ENCODE measurements at regions of chr21 and their contacts with region 1.

Region 1: DNA sequence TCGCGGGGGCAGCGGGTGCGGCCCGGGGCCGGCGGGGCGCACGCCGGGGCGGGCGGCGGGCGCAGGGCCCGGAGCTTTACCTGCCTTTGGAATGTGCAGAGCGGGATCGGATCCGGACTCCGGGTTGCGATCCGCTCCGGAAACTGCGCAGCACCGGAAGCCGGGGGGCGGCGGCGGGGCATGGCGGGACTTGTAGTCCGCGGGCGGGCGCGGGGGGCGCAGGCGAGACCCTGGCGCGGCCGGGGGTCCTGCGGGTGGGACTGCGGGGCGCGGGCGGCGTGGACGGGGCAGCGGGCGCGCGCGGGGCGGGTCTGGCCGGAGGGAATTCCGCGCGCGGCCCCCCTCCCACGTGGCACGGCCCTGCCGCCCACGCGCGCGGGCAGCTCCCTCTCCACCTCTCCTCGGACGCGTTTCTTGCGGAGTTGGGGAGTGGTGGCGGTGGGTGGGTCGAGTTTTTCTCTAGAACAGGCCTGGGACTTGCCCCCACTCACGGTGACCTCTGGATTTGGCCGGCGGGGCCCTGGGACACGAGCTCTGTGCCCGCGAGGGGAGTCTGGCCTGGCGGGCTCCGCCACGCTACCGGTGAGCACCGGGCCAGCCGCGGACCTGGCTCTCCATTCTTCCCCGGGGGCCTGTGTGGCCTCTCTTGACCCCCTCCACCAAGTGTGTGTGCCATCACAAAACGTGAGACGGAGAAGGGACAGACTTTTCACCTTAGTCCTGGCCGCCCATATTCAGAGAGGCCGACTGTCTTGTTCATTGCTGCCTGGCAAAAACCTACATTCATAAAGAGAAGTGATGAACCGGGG is at the start of gene PRDM15:
- DNase-seq: peak; percentile 88
- H3K4me3 ChIP-seq: peak within 1 kb of the TSS; percentile 81
- H3K27ac ChIP-seq: peak within 1 kb of the TSS; percentile 96
- H3K4me1 ChIP-seq: peaks cover 48% of the 10 kb centered on the region
- CTCF ChIP-seq: no peak
- total RNA-seq, gene PRDM15: 19.7 and 30.5 TPM in 2 replicates

Region 2: GRCh38 chr21:41750048-41750447 is 129.3 kb before region 1 on chr21:
- CTCF ChIA-PET with region 1: no interaction called
- POLR2A ChIA-PET with region 1: interaction called, 10 read pairs
- intact Hi-C with region 1: no loop called
- DNase-seq: no peak
- H3K4me3 ChIP-seq: no peak overlapping the region
- H3K27ac ChIP-seq: no peak overlapping the region
- H3K4me1 ChIP-seq: peaks cover 8% of the 10 kb centered on the region
- CTCF ChIP-seq: no peak

Region 3: DNA sequence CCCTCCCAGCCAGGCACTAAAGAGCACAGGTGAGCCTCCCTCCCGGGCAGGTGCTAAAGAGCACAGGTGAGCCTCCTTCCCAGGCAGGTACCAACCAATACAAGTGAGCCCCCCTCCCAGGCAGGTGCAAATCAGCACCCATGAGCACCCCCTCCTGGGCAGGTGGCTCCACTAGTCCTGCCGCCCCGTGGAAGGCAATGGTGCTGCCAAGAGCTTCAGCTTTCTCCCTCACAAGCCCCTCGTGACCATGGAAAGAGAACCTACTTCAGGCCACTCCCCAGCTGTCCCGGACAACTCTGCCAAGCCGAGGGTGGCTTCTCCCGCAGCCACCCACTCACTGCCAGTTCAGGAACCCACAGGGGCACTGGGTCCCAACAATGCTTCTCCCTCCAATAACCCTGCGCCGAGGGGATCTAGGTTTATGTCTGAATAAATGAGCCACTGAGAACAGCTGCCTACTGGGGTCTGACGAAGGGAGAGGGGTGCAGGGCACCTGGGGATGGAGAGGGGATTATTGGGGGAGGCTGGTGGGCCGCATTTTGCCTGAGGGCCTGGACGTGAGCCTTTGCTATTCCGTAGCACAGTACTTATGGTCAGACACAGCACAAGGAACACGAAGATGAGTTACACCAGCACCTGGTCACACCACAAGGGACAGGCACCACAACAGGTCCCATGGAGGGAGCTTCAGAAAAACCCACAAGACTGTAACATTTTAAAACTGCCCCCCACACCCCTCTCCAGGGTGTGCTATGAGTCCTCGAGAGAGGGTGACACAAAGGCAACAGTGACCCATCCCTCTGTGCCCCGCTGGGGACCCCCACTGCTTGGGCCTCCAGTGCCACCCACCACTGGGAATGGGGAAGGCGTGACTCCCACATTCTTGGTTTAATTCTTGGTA is 46.5 kb before region 1 on chr21:
- CTCF ChIA-PET with region 1: interaction called, 4 read pairs
- POLR2A ChIA-PET with region 1: interaction called, 7 read pairs
- intact Hi-C with region 1: loop called (anchors 1 kb)
- DNase-seq: peak; percentile 77
- H3K4me3 ChIP-seq: peak overlapping the region; percentile 43
- H3K27ac ChIP-seq: peak overlapping the region; percentile 95
- H3K4me1 ChIP-seq: peaks cover 71% of the 10 kb centered on the region
- CTCF ChIP-seq: peak; percentile 66

Region 4: DNA sequence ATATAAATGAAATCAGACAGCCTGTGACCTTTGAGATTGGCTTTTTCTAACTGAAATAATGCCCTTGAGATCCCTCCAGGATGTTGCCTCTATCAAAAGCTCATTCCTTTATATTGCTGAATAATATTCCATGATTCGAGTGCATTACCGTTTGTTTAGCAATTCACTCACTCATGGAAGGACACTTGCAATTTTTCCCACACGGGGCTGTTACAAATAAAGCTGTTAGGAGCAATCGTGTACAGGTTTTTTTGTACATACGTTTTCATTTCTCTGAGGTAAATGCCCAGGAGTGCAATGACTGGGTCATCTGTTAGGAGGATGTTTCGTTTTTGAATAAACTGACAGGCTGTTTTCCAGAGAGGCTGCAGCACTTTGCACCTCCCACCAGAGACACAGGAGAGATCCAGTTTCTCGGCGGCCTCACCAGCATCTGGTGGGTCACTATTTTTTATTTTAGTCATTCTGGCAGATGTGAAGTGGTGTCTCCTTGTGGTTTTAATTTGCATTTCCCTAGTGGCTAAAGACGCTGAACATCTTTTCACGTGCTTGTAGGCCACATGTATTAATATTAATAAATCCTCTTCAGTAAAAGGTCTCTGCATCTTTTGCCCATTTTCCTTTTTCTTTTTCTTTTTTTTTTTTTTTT is 11.2 kb before region 1 on chr21:
- CTCF ChIA-PET with region 1: interaction called, 5 read pairs
- POLR2A ChIA-PET with region 1: interaction called, 34 read pairs
- intact Hi-C with region 1: no loop called
- DNase-seq: peak; percentile 96
- H3K4me3 ChIP-seq: peak overlapping the region; percentile 58
- H3K27ac ChIP-seq: peak overlapping the region; percentile 96
- H3K4me1 ChIP-seq: peaks cover 98% of the 10 kb centered on the region
- CTCF ChIP-seq: no peak

Region 5: GRCh38 chr21:42009831-42010523 is 130.6 kb after region 1 on chr21 and contains the start of gene ZBTB21:
- CTCF ChIA-PET with region 1: no interaction called
- POLR2A ChIA-PET with region 1: interaction called, 3 read pairs
- intact Hi-C with region 1: loop called (anchors 5 kb)
- DNase-seq: peak; percentile 98
- H3K4me3 ChIP-seq: peak within 1 kb of the TSS; percentile 79
- H3K27ac ChIP-seq: peak within 1 kb of the TSS; percentile 65
- H3K4me1 ChIP-seq: peaks cover 38% of the 10 kb centered on the region
- CTCF ChIP-seq: no peak
- total RNA-seq, gene ZBTB21: 10.0 and 12.4 TPM in 2 replicates

Region 6: GRCh38 chr21:42021366-42022090 is 142.1 kb after region 1 on chr21:
- CTCF ChIA-PET with region 1: no interaction called
- POLR2A ChIA-PET with region 1: no interaction called
- intact Hi-C with region 1: no loop called
- DNase-seq: no peak
- H3K4me3 ChIP-seq: no peak overlapping the region
- H3K27ac ChIP-seq: no peak overlapping the region
- H3K4me1 ChIP-seq: peaks cover 10% of the 10 kb centered on the region
- CTCF ChIP-seq: no peak